Ovary (tissue), 10 donors: ENCODE measurements at regions of chr3 and their contacts with region 1.

Region 1: GRCh38 chr3:150495563-150496168 is 50.6 kb downstream of the SERP1 start:
- DNase-seq: no peak
- H3K4me3 ChIP-seq: no peak overlapping the region
- H3K27ac ChIP-seq: no peak overlapping the region
- H3K4me1 ChIP-seq: no peaks in the 10 kb centered on the region
- H3K27me3 ChIP-seq: no peaks in the 10 kb centered on the region
- CTCF ChIP-seq: peak; percentile 69 to 84 (median 71)
- EP300 ChIP-seq: no peak
- POLR2A ChIP-seq: no peak

Region 2: DNA sequence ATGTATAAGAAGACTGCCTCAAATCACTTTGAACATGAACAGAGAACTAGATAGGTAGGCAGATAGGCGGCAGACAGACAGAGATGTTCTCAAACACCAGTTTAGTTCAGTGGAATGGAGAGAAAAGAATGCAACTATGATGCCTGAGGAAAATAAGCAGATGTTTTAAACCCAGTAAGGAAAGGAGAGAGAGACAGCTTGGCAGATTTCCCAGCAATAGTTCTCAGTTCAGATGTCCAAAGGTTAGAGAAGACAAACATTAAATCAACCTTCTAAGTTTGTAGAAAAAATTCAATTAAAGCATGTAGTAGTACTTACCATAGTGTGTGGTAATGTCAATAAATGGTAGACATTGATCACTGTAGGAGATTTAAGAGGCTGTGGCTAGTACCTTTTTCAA is 315.3 kb before region 1 on chr3:
- intact Hi-C with region 1: no loop called
- DNase-seq: no peak
- H3K4me3 ChIP-seq: no peak overlapping the region
- H3K27ac ChIP-seq: no peak overlapping the region
- H3K4me1 ChIP-seq: no peaks in the 10 kb centered on the region
- H3K27me3 ChIP-seq: no peaks in the 10 kb centered on the region
- CTCF ChIP-seq: no peak
- EP300 ChIP-seq: no peak
- POLR2A ChIP-seq: no peak

Region 3: GRCh38 chr3:150227839-150228238 is 267.8 kb before region 1 on chr3:
- intact Hi-C with region 1: loop called in 1 of 4 experiments (anchors 10 kb)
- DNase-seq: no peak
- H3K4me3 ChIP-seq: no peak overlapping the region
- H3K27ac ChIP-seq: no peak overlapping the region
- H3K4me1 ChIP-seq: no peaks in the 10 kb centered on the region
- H3K27me3 ChIP-seq: no peaks in the 10 kb centered on the region
- CTCF ChIP-seq: no peak
- EP300 ChIP-seq: no peak
- POLR2A ChIP-seq: no peak

Region 4: GRCh38 chr3:150303776-150304175 is 191.9 kb before region 1 on chr3:
- intact Hi-C with region 1: loop called in 1 of 4 experiments (anchors 10 kb)
- DNase-seq: no peak
- H3K4me3 ChIP-seq: no peak overlapping the region
- H3K27ac ChIP-seq: no peak overlapping the region
- H3K4me1 ChIP-seq: peaks cover 4% of the 10 kb centered on the region
- H3K27me3 ChIP-seq: no peaks in the 10 kb centered on the region
- CTCF ChIP-seq: no peak
- EP300 ChIP-seq: no peak
- POLR2A ChIP-seq: no peak

Region 5: GRCh38 chr3:150408221-150409102 is 87.2 kb before region 1 on chr3 and contains the start of gene TSC22D2:
- intact Hi-C with region 1: loop called in 1 of 4 experiments (anchors 5 kb)
- DNase-seq: peak; percentile 97 to 99 (median 98)
- H3K4me3 ChIP-seq: peak within 1 kb of the TSS; percentile 78
- H3K27ac ChIP-seq: peak within 1 kb of the TSS; percentile 100
- H3K4me1 ChIP-seq: no peaks in the 10 kb centered on the region
- H3K27me3 ChIP-seq: no peaks in the 10 kb centered on the region
- CTCF ChIP-seq: peak in 1 of 3 donors; percentile 47
- EP300 ChIP-seq: peak; percentile 64
- POLR2A ChIP-seq: peak; percentile 98
- total RNA-seq, gene TSC22D2: 13.8 to 33.4 (median 28.0) TPM

Region 6: DNA sequence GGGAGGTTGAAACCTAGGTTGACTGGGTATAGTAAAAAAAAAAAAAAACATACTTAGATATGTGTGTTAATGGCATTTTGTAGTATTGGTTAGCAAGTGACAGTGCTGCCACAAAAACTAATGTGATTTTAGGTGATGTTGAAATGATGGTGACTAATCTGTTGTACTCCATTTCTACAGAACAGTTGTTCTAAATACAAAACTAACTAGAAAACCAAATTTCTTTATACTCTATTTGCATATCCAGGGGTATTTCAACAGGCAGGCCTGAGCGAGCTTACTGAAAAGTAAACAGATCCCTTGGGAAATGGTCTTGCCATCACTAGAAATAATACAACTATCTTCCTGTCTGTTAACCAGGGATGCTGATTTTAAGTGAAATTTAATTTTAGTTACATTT is 67.1 kb before region 1 on chr3:
- intact Hi-C with region 1: no loop called
- DNase-seq: no peak
- H3K4me3 ChIP-seq: no peak overlapping the region
- H3K27ac ChIP-seq: no peak overlapping the region
- H3K4me1 ChIP-seq: no peaks in the 10 kb centered on the region
- H3K27me3 ChIP-seq: no peaks in the 10 kb centered on the region
- CTCF ChIP-seq: no peak
- EP300 ChIP-seq: no peak
- POLR2A ChIP-seq: no peak

Region 7: DNA sequence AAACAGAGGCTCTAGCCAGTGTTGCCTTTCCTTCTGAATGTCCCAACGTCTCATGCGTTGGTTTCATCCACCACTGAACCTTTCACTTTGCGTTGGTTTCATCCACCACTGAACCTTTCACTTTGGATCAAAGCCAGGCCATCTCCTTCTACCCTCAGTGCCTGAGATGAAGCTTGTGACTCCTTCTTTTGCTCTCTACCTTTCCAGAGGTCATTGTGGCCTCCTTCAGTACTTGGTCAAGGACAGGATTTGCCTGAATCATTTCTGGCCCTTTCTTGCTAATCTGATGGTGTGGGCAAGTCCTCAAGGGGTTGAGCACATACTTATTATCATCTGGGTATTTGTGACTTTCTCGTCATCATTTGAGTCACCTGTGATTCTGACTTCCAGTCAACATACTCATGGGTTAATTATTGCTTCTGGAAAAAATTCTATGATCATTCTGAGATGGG is 157.5 kb after region 1 on chr3:
- intact Hi-C with region 1: no loop called
- DNase-seq: no peak
- H3K4me3 ChIP-seq: no peak overlapping the region
- H3K27ac ChIP-seq: no peak overlapping the region
- H3K4me1 ChIP-seq: no peaks in the 10 kb centered on the region
- H3K27me3 ChIP-seq: no peaks in the 10 kb centered on the region
- CTCF ChIP-seq: no peak
- EP300 ChIP-seq: no peak
- POLR2A ChIP-seq: no peak